HCT116 (cell line): ENCODE measurements at regions of chr11 and their contacts with region 1.

Region 1: GRCh38 chr11:9015677-9016076 is 11.9 kb upstream of the NRIP3 start:
- DNase-seq: peak; percentile 75
- ATAC-seq: peak; percentile 98
- H3K4me3 ChIP-seq: no peak overlapping the region
- H3K27ac ChIP-seq: no peak overlapping the region
- H3K4me1 ChIP-seq: 0 out of 4 replicates have a peak, but pooled peaks cover 0 to 2% of the 10 kb centered on the region in 2 experiments
- H3K27me3 ChIP-seq: no peaks in the 10 kb centered on the region
- CTCF ChIP-seq: peak; percentile 81 to 85 (median 82)
- POLR2A ChIP-seq: no peak
- RAD21 ChIP-seq: peak; percentile 76

Region 2: GRCh38 chr11:8878771-8879170 is 136.9 kb before region 1 on chr11:
- CTCF ChIA-PET with region 1: no interaction called
- POLR2A ChIA-PET with region 1: no interaction called
- RAD21 ChIA-PET with region 1: no interaction called
- intact Hi-C with region 1: no loop called
- DNase-seq: no peak
- ATAC-seq: no peak
- H3K4me3 ChIP-seq: no peak overlapping the region
- H3K27ac ChIP-seq: no peak overlapping the region
- H3K4me1 ChIP-seq: no peaks in the 10 kb centered on the region
- H3K27me3 ChIP-seq: no peaks in the 10 kb centered on the region
- CTCF ChIP-seq: no peak
- POLR2A ChIP-seq: no peak
- RAD21 ChIP-seq: no peak

Region 3: DNA sequence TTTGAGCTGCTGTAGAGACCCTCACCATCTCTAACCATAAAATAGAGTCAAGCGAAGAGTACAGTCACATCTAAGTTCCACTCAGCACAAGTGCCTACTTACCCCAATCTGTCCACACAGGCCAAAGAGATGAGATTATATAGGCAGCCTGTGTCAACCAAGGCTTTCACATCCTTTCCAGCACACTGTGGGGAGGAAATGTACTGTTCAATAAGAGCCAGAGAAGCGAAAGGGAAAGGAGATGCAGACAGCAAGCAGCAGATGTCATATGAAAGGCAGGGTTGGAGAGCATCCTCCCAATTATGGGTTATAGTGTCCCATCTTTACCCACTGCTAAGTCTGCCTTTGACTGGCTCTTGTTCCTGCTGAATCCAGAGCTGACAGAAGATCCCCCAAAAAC is 28.2 kb before region 1 on chr11:
- CTCF ChIA-PET with region 1: no interaction called
- POLR2A ChIA-PET with region 1: no interaction called
- RAD21 ChIA-PET with region 1: no interaction called
- intact Hi-C with region 1: no loop called
- DNase-seq: no peak
- ATAC-seq: no peak
- H3K4me3 ChIP-seq: no peak overlapping the region
- H3K27ac ChIP-seq: no peak overlapping the region
- H3K4me1 ChIP-seq: peaks cover 0 to 12% of the 10 kb centered on the region in 2 experiments; a peak in 2 of 4 replicates
- H3K27me3 ChIP-seq: no peaks in the 10 kb centered on the region
- CTCF ChIP-seq: no peak
- POLR2A ChIP-seq: no peak
- RAD21 ChIP-seq: no peak

Region 4: GRCh38 chr11:9028581-9028980 is 12.9 kb after region 1 on chr11:
- CTCF ChIA-PET with region 1: interaction called, 12 read pairs
- POLR2A ChIA-PET with region 1: no interaction called
- RAD21 ChIA-PET with region 1: no interaction called
- intact Hi-C with region 1: no loop called
- DNase-seq: no peak
- ATAC-seq: no peak
- H3K4me3 ChIP-seq: no peak overlapping the region
- H3K27ac ChIP-seq: no peak overlapping the region
- H3K4me1 ChIP-seq: peaks cover 0 to 6% of the 10 kb centered on the region in 2 experiments; a peak in 1 of 4 replicates
- H3K27me3 ChIP-seq: no peaks in the 10 kb centered on the region
- CTCF ChIP-seq: no peak
- POLR2A ChIP-seq: no peak
- RAD21 ChIP-seq: no peak

Region 5: DNA sequence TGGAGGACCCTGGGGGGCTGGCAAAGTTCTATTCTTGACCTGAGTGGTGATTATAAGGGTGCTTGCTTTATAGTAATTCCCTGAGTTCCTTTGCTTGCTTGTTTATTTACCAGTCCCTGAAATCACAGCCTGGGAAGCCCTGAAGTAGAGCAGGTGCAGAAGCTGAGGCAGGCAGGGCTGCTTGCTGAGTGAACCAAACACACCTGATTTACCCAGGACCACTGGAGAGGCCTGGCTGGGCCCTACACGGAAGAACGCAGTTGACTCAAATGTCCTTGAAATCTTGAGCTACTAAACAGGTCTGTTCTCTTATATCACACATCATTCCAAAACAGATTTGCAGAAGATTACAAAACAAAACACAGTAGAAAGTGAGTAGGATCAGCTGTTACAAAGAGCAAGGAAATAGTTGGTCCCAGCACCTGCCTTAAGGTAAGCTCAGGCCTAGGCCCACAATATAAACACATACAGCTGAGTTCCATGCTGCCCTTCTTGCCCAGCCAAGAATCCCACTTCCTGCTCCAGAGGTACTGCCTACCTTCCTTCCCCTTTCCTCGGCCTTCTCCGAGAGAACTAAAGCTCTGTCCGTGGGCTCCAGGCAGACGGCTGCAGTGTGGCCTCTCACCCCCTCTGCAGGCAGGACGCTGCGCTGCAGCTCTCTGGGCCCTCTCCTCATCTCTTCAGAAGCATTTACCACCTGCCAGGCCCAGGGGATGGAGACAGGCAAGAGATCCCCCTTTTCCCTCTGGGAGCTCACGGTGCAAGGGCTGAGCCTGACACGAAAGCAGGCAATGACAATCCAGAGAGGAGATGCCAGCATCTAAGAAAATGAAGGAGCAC is 121.8 kb after region 1 on chr11:
- CTCF ChIA-PET with region 1: interaction called, 26 read pairs
- POLR2A ChIA-PET with region 1: no interaction called
- RAD21 ChIA-PET with region 1: interaction called, 5 to 20 read pairs
- intact Hi-C with region 1: loop called (anchors 1 kb)
- DNase-seq: peak; percentile 36
- ATAC-seq: peak; percentile 90
- H3K4me3 ChIP-seq: no peak overlapping the region
- H3K27ac ChIP-seq: no peak overlapping the region; the same call in 1 of the 2 replicates
- H3K4me1 ChIP-seq: peaks cover 33 to 35% of the 10 kb centered on the region in 2 experiments
- H3K27me3 ChIP-seq: no peaks in the 10 kb centered on the region
- CTCF ChIP-seq: peak; percentile 73 to 97 (median 91)
- POLR2A ChIP-seq: no peak
- RAD21 ChIP-seq: peak; percentile 88